Gastrocnemius medialis (tissue), 4 donors: ENCODE measurements at regions of chr13 and their contacts with region 1.

Region 1: GRCh38 chr13:24020375-24020830 is 123.1 kb upstream of the C1QTNF9B start:
- DNase-seq: no peak
- ATAC-seq: no peak
- H3K4me3 ChIP-seq: no peak overlapping the region
- H3K27ac ChIP-seq: no peak overlapping the region
- H3K4me1 ChIP-seq: no peaks in the 10 kb centered on the region
- H3K27me3 ChIP-seq: no peaks in the 10 kb centered on the region
- CTCF ChIP-seq: peak; percentile 17 to 53 (median 43)
- POLR2A ChIP-seq: no peak

Region 2: DNA sequence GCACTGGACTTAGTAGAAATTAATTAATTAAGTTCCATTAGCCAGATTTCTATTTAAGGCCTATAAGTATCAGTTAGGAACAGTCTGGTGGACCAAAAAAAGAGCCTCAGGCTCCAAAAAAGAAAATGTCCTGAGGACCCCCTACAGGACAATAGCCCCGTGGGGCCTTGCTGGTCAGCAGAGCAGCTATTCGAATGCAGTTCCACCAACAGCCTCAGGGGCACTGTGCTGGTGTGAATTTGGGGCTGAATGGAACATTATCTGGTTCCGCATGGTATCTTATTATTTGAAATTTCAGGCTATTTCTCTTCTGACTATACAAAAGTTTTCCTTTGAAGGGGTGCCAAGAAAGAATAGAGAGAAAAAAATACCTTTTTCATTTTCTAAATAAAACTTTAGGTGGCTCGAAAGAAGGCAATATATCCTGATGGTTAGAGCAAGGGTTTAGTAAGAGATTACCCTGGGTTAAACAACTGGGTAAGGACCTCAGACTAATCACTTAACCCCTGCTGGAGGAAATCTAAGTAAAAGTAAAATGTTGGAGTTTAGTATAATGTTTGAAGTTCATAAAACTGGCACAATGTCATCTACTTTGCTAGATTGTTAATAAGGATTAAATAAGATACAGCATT is 278.4 kb before region 1 on chr13:
- in situ Hi-C with region 1: no loop called
- intact Hi-C with region 1: no loop called
- DNase-seq: no peak
- ATAC-seq: no peak
- H3K4me3 ChIP-seq: no peak overlapping the region
- H3K27ac ChIP-seq: no peak overlapping the region
- H3K4me1 ChIP-seq: no peaks in the 10 kb centered on the region
- H3K27me3 ChIP-seq: no peaks in the 10 kb centered on the region
- CTCF ChIP-seq: peak in 1 of 5 experiments; percentile 27
- POLR2A ChIP-seq: no peak

Region 3: DNA sequence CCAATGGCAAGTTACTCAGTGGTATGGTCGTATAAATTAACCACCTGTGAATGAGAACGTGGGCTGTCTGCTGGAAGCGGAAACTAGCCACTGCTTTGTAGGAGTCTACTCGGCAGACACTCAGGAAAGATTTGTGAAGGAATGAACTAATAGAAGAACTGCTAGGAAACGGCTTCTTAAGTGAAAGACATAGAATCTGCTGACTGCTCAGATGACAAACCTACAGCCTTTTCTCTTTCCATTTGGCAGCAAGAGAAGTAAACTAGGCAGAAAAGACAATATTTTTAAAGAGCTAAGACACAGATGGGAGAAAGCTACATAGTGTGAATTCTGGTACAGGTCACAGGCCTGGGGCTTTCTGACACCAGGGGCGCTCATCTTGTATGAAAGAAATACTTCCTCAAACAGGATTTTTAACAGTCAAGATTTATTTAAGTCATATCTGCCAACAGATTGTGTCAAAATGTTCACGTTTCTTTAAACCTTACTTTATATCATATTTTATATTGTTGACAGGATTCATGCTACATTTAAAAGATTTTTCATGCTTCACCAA is 209.6 kb before region 1 on chr13:
- in situ Hi-C with region 1: no loop called
- intact Hi-C with region 1: no loop called
- DNase-seq: no peak
- ATAC-seq: no peak
- H3K4me3 ChIP-seq: no peak overlapping the region
- H3K27ac ChIP-seq: no peak overlapping the region
- H3K4me1 ChIP-seq: no peaks in the 10 kb centered on the region
- H3K27me3 ChIP-seq: no peaks in the 10 kb centered on the region
- CTCF ChIP-seq: no peak
- POLR2A ChIP-seq: no peak

Region 4: GRCh38 chr13:24053519-24054251 is 33.3 kb after region 1 on chr13:
- in situ Hi-C with region 1: no loop called
- intact Hi-C with region 1: loop called (anchors 2 kb)
- DNase-seq: no peak
- ATAC-seq: peak in 1 of 2 donors; percentile 32
- H3K4me3 ChIP-seq: no peak overlapping the region
- H3K27ac ChIP-seq: peak overlapping the region in 2 of 4 donors; percentile 48 to 57
- H3K4me1 ChIP-seq: peaks cover 3 to 13% of the 10 kb centered on the region in 2 donors
- H3K27me3 ChIP-seq: no peaks in the 10 kb centered on the region
- CTCF ChIP-seq: peak; percentile 32 to 54 (median 50)
- POLR2A ChIP-seq: no peak

Region 5: DNA sequence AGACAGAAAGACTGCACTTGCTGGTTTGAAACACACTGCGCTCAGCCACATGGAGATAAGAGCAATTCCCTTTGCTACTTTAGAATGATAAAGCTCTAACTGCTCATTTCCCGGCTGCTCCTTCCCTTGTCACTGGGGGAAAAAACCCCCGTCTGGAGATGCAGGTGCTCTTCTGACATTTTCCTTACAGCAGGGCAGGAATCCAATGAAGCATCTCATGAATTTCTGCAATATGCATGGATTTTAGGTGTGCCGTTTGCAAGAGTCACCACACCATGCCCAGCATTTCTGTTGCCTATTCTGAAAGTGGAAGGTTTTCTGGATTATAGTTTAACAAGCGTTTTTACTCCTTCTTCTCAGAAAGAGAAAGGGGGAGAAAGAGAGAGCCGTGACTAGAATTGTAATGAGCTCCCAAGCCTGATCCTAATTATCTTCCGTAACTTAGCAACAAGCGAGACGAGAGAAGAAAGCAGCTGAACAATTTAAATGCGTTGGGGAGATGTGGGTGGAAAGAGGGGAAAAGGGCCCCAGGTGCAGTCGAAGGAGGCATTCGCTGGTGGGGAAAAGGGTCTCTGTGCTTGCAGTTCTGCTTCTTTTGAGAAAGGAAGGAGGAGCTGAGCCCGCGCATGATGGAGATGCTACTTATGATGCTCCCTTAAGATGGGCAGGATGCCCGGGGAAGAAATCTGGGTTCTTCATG is 63.5 kb after region 1 on chr13:
- in situ Hi-C with region 1: no loop called
- intact Hi-C with region 1: no loop called
- DNase-seq: no peak
- ATAC-seq: no peak
- H3K4me3 ChIP-seq: no peak overlapping the region
- H3K27ac ChIP-seq: no peak overlapping the region
- H3K4me1 ChIP-seq: no peaks in the 10 kb centered on the region
- H3K27me3 ChIP-seq: no peaks in the 10 kb centered on the region
- CTCF ChIP-seq: no peak
- POLR2A ChIP-seq: no peak

Region 6: GRCh38 chr13:24228852-24229458 is 208.6 kb after region 1 on chr13:
- in situ Hi-C with region 1: loop called in 3 of 4 experiments (anchors 5 to 10 kb)
- intact Hi-C with region 1: loop called (anchors 2 kb)
- DNase-seq: no peak
- ATAC-seq: peak in 1 of 2 donors; percentile 55
- H3K4me3 ChIP-seq: no peak overlapping the region
- H3K27ac ChIP-seq: no peak overlapping the region
- H3K4me1 ChIP-seq: no peaks in the 10 kb centered on the region
- H3K27me3 ChIP-seq: no peaks in the 10 kb centered on the region
- CTCF ChIP-seq: peak; percentile 37 to 77 (median 47)
- POLR2A ChIP-seq: no peak